Dendritic cell treated with granulocyte-macrophage colony-stimulating factor and Interleukin-4, amounts not matched to agents 40 ng/mL and 50 ng/mL, for 4 days (primary cell): ENCODE measurements at regions of chr18 and their contacts with region 1.

Region 1: DNA sequence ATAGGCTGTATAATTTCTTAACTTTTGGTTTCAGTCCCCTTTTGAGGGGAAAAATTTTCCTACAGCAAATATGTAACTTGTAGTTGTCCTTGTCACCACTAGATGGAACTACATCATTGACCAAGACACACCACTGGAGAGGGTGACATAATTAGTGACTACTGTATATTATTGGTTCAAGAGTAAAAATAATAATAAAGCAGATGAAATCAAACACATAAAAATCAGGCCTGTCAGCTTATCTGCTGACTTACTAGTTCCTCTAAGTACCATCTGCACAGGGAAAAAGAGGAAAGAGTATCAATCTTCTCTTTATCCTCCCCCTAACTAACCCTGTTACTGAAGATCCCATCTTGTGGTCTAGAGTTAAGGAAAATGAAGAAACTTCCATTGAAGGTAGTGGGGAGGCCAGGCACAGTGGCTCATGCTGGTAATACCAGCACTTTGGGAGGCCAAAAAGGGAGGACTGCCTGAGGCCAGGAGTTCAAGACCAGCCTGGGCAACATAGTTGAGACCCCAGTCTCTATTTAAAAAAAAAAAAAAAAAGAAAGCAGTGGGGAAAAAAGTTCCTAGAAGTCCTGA is 29.6 kb upstream of the ENOSF1 start:
- H3K4me3 Mint-ChIP-seq: no peak overlapping the region
- H3K27ac Mint-ChIP-seq: no peak overlapping the region
- H3K4me1 Mint-ChIP-seq: no peaks in the 10 kb centered on the region
- H3K27me3 Mint-ChIP-seq: peaks cover 20% of the 10 kb centered on the region

Region 2: DNA sequence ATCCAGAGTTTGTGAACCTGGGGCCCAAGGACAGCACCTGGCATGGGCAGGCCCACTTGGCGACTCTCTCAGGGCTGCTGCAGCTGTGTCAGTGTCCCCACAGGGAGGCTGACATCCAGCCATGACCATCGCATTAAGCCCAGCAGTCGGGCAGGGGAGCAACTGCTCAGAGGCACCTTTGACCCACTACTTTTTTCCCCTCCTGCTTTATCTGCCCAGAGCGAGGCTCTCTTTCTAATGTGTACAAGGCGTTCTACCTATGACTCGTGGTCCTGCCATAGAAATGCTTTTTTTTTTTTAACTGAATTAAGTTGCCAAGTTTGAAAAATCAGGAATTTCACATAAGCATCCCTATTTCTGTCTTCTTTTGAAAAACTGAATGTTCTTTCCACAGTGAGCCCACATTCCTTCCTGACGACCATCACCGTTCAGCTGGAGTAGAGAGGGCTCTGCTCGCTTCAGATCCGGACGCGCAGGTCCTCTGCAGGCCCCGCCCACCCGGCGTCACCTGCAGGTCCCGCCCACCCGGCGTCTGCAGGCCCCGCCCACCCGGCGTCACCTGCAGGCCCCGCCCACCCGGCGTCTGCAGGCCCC is 145.6 kb before region 1 on chr18:
- intact Hi-C with region 1: no loop called
- H3K4me3 Mint-ChIP-seq: no peak overlapping the region
- H3K27ac Mint-ChIP-seq: no peak overlapping the region
- H3K4me1 Mint-ChIP-seq: peaks cover 7% of the 10 kb centered on the region
- H3K27me3 Mint-ChIP-seq: peaks cover 40% of the 10 kb centered on the region

Region 3: GRCh38 chr18:830315-830901 is 88.4 kb after region 1 on chr18:
- intact Hi-C with region 1: loop called (anchors 1 kb)
- H3K4me3 Mint-ChIP-seq: no peak overlapping the region
- H3K27ac Mint-ChIP-seq: no peak overlapping the region
- H3K4me1 Mint-ChIP-seq: peaks cover 15% of the 10 kb centered on the region
- H3K27me3 Mint-ChIP-seq: peaks cover 71% of the 10 kb centered on the region

Region 4: DNA sequence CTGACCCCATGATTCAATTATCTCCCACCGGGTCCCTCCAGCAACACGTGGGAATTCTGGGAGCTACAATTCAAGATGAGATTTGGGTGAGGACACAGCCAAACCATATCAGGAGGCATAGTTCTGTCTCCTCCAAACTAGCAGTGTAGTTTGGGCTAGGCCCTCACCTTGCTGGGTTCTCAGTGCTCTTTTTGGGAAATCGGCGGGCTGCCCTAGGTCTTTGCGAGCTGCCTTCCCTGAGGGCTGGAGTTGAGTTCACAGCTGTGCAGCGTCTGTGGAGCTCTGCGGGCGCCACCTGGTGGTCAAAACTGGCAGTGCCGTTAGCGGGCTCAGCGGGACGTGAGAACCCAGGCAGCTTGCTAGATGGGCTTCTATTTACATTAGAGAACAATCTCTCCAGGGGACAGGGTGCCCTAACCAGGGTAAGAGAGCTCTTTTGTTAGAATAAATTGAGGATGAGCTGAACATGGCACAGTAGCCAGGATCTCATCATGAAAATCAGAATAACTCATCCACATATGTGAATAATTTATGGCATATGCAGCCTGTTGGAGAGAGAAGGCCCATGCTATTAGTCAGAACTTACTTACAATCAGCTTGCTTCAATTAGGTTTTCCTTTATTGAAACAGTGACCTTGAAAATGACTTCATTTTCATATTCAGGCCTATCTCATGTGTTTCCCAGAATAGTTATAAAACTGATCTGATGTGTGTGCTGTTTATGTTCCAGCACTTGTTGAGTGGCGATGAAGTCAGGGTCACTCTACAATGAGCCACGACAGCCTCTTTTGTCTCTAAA is 97.4 kb after region 1 on chr18:
- intact Hi-C with region 1: loop called (anchors 1 kb)
- H3K4me3 Mint-ChIP-seq: no peak overlapping the region
- H3K27ac Mint-ChIP-seq: no peak overlapping the region
- H3K4me1 Mint-ChIP-seq: no peaks in the 10 kb centered on the region
- H3K27me3 Mint-ChIP-seq: peaks cover 64% of the 10 kb centered on the region